ENCODE measurements at regions of chr12 and their contacts with region 1.

Region 1: DNA sequence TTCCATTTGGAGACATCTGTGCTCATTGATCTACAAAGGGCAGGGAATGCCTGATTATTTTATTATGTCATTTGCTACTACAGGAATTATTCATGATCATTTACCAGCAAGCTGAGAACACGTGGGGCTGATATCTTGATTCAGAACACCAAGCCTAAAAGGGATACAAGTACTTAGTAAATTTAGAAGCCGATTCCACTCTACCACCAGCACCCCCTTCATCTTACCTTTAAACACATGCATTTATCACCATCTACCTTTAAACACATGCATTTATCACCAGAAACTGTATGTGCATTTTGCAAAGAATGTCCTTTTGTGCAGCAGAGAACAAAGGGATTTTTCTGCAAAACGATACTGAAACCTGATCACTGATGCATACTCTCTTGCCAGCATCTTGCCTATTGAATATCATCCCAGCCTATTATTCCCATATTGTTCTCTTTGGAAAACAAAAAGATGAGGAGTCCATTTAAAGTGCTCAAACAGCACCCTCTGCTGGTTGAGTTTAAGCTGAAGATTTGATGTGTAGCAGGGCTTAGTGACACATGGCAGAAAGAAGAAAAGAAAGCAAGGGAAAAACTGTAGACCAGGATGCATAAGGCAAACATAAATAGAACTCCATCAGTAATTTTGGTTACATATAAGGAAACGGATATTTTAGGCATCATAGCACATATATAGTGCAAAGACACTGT is 132.6 kb upstream of the PLEKHG7 start:
- DNase-seq: no peak
- ATAC-seq: peak; percentile 87

Region 2: GRCh38 chr12:91811481-91812287 is 758.5 kb before region 1 on chr12:
- intact Hi-C with region 1: loop called (anchors 5 kb)
- DNase-seq: peak; percentile 81
- ATAC-seq: peak; percentile 70

Region 3: DNA sequence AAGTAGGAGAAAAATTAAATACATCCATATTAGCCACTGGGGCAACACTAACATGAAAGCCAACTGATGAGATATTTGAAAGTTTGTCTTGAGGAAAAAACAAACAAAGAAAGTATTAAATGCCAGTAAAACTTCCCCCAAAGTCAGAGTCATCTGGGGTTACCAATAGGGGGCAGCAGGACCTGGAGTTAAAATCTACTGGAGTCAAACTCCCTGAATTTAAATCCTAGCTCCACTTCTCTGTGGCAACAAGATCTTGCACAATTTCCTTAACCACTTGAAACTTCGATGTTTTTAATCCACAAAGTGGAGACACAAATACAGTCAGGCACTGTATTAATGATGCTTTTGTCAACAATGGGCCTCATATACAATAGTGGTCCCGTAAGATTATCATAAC is 147.0 kb after region 1 on chr12:
- intact Hi-C with region 1: no loop called
- DNase-seq: no peak
- ATAC-seq: no peak

Measured in left ventricle myocardium superior (tissue), 1 donor.